ENCODE measurements at regions of chr7 and their contacts with region 1.

Region 1: GRCh38 chr7:72785166-72785955 is 42.6 kb downstream of the TYW1B start:
- DNase-seq: peak; percentile 81
- H3K4me3 ChIP-seq: no peak overlapping the region
- H3K27ac ChIP-seq: no peak overlapping the region
- H3K4me1 ChIP-seq: peaks cover 24% of the 10 kb centered on the region
- H3K27me3 ChIP-seq: no peaks in the 10 kb centered on the region

Region 2: GRCh38 chr7:71752171-71752935 is 1033.0 kb before region 1 on chr7:
- in situ Hi-C with region 1: loop called (anchors 25 kb)
- DNase-seq: peak; percentile 46
- H3K4me3 ChIP-seq: no peak overlapping the region
- H3K27ac ChIP-seq: no peak overlapping the region
- H3K4me1 ChIP-seq: 0 out of 2 replicates have a peak, but pooled peaks cover 3% of the 10 kb centered on the region
- H3K27me3 ChIP-seq: 0 out of 2 replicates have a peak, but pooled peaks cover 5% of the 10 kb centered on the region

Region 3: DNA sequence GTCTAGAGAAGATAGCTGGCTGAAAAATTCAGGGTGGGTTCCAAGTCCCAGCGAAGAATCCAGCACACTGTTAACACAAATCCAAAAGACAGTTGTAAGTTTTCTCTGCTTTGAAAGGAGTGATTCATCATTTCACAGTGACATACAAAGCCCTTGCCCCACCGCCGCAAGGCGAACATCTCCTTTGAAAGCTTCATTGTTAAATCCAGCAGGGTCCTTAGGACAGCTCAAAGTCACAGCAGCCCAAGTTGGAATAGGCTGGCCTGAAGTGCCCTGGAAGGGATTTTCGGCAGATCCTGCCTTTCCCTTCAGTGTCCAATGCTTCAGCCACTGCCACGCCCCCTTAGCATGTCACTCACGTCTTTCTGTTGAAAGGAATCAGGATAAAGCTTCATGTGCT is 899.3 kb before region 1 on chr7:
- in situ Hi-C with region 1: no loop called
- DNase-seq: no peak
- H3K4me3 ChIP-seq: no peak overlapping the region
- H3K27ac ChIP-seq: no peak overlapping the region
- H3K4me1 ChIP-seq: no peaks in the 10 kb centered on the region
- H3K27me3 ChIP-seq: no peaks in the 10 kb centered on the region

Measured in GM23248 (cell line).